ENCODE measurements at regions of chrX and their contacts with region 1.

Region 1: GRCh38 chrX:3743801-3744439 is 30.5 kb upstream of the PRKX start:
- DNase-seq: peak; percentile 11 to 81 (median 51)
- ATAC-seq: peak; percentile 65 to 96 (median 94)
- H3K4me3 ChIP-seq: no peak overlapping the region
- H3K4me3 Mint-ChIP-seq: peak overlapping the region; percentile 31 to 60 (median 38)
- H3K27ac ChIP-seq: peak overlapping the region; percentile 57
- H3K27ac Mint-ChIP-seq: peak overlapping the region; percentile 71 to 84
- H3K4me1 ChIP-seq: peaks cover 0 to 19% of the 10 kb centered on the region in 2 experiments
- H3K4me1 Mint-ChIP-seq: peaks cover 33 to 42% (median 38%) of the 10 kb centered on the region in 3 donors
- H3K27me3 ChIP-seq: no peaks in the 10 kb centered on the region
- H3K27me3 Mint-ChIP-seq: no peaks in the 10 kb centered on the region

Region 2: GRCh38 chrX:3651276-3651675 is 92.6 kb before region 1 on chrX:
- CTCF ChIA-PET with region 1: no interaction called
- POLR2A ChIA-PET with region 1: no interaction called
- DNase-seq: peak in 1 of 35 experiments; percentile 41
- ATAC-seq: no peak
- H3K4me3 ChIP-seq: no peak overlapping the region
- H3K4me3 Mint-ChIP-seq: no peak overlapping the region
- H3K27ac ChIP-seq: no peak overlapping the region
- H3K27ac Mint-ChIP-seq: peak overlapping the region in 1 of 2 donors; percentile 48
- H3K4me1 ChIP-seq: no peaks in the 10 kb centered on the region
- H3K4me1 Mint-ChIP-seq: peaks cover 0 to 3% (median 0%) of the 10 kb centered on the region in 3 donors
- H3K27me3 ChIP-seq: no peaks in the 10 kb centered on the region
- H3K27me3 Mint-ChIP-seq: no peaks in the 10 kb centered on the region

Region 3: DNA sequence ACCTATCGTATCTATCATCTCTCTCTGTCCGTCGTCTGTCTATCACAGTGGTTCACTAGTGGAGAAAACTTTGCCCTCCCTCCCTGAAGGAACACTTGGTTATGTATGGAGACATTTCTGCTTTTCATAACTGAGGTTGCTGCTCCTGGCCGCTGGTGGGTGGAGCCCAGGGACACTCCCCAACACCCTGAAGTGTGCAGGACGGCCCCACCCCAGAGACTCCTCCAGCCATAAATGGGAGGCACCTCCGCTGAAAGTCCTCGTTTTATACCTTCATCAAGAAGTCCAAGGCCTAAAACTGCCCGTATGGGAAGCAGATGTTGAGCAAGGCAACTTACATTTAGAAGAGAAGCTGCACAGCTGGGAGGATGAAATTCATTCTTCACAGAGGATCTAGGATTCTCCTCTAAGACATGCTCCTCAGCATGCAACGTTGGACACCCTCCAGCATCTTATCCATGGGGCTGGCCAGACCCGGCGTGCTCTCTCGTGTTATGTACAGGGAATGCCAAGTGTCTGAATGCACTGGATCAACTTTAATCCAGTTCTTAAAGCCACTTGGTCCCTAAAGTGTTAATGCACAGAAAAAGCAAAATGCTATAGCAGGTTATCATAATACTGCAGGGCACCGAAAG is 74.0 kb before region 1 on chrX:
- CTCF ChIA-PET with region 1: no interaction called
- POLR2A ChIA-PET with region 1: no interaction called
- DNase-seq: no peak
- ATAC-seq: no peak
- H3K4me3 ChIP-seq: no peak overlapping the region
- H3K4me3 Mint-ChIP-seq: no peak overlapping the region
- H3K27ac ChIP-seq: no peak overlapping the region
- H3K27ac Mint-ChIP-seq: no peak overlapping the region
- H3K4me1 ChIP-seq: no peaks in the 10 kb centered on the region
- H3K4me1 Mint-ChIP-seq: peaks cover 0 to 12% (median 2%) of the 10 kb centered on the region in 3 donors
- H3K27me3 ChIP-seq: no peaks in the 10 kb centered on the region
- H3K27me3 Mint-ChIP-seq: no peaks in the 10 kb centered on the region

Region 4: GRCh38 chrX:3713225-3713936 is 30.5 kb before region 1 on chrX and contains the start of gene PRKX:
- CTCF ChIA-PET with region 1: no interaction called
- POLR2A ChIA-PET with region 1: interaction called in 1 of 2 experiments, 19 read pairs
- DNase-seq: peak; percentile 48 to 87 (median 67)
- ATAC-seq: peak; percentile 89 to 95 (median 92)
- H3K4me3 ChIP-seq: peak within 1 kb of the TSS; percentile 73 to 78
- H3K4me3 Mint-ChIP-seq: peak within 1 kb of the TSS; percentile 97 to 99 (median 98)
- H3K27ac ChIP-seq: peak within 1 kb of the TSS; percentile 76
- H3K27ac Mint-ChIP-seq: peak within 1 kb of the TSS; percentile 95 to 96
- H3K4me1 ChIP-seq: peaks cover 4 to 35% of the 10 kb centered on the region in 2 experiments
- H3K4me1 Mint-ChIP-seq: peaks cover 27 to 42% (median 31%) of the 10 kb centered on the region in 3 donors
- H3K27me3 ChIP-seq: no peaks in the 10 kb centered on the region
- H3K27me3 Mint-ChIP-seq: no peaks in the 10 kb centered on the region
- total RNA-seq, gene PRKX: 55.9 to 83.2 (median 63.2) TPM

Region 5: GRCh38 chrX:3788509-3789233 is 44.8 kb after region 1 on chrX:
- CTCF ChIA-PET with region 1: no interaction called
- POLR2A ChIA-PET with region 1: interaction called in 1 of 2 experiments, 14 read pairs
- DNase-seq: peak in 15 of 35 experiments; percentile 1 to 40 (median 6)
- ATAC-seq: peak in 1 of 4 experiments; percentile 54
- H3K4me3 ChIP-seq: no peak overlapping the region
- H3K4me3 Mint-ChIP-seq: no peak overlapping the region
- H3K27ac ChIP-seq: no peak overlapping the region
- H3K27ac Mint-ChIP-seq: no peak overlapping the region
- H3K4me1 ChIP-seq: peaks cover 0 to 4% of the 10 kb centered on the region in 2 experiments
- H3K4me1 Mint-ChIP-seq: peaks cover 3 to 14% (median 9%) of the 10 kb centered on the region in 3 donors
- H3K27me3 ChIP-seq: peaks cover 0 to 2% of the 10 kb centered on the region in 2 experiments
- H3K27me3 Mint-ChIP-seq: peaks cover 0 to 22% of the 10 kb centered on the region in 2 donors

Measured in T-cell (primary cell).